Activated naive CD4-positive, alpha-beta T cell treated with anti-CD3 and anti-CD28 coated beads for 36 hours (primary cell): ENCODE measurements at regions of chr7 and their contacts with region 1.

Region 1: DNA sequence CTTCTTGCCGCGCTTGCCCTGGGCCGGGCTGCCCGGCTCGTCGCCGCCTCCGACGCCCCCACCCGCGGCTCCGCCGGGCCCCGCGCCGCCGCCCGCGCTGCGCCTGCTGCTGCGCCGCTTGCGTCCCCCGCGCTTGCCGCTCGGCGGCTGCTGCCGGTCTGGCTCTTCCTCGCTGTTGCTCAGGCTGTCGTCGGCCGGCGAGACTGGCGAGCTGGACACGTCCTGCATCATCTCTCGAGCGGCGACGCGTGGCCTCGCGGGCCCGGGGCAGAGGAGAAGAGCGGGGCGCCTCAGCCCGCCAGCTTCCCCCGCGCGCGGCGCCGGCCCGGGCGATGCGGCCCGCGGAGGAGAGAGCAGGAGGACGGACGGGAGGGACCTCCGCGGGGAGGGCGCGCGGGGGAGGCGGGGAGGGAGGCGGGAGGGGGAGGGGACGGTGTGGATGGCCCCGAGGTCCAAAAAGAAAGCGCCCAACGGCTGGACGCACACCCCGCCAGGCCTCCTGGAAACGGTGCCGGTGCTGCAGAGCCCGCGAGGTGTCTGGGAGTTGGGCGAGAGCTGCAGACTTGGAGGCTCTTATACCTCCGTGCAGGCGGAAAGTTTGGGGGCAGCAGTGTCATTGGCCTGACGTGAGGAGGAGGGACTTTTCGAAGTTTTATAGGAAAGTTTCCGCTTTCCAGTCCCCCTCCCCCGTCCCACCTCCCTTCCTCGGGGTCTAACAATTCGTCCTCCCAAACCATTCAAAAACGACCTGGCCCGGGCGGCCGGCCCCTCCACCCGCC is at the start of gene TWIST1:
- DNase-seq: no peak
- H3K4me3 Mint-ChIP-seq: no peak within 1 kb of the TSS
- H3K27ac Mint-ChIP-seq: no peak within 1 kb of the TSS
- H3K4me1 Mint-ChIP-seq: peaks cover 3% of the 10 kb centered on the region
- H3K27me3 Mint-ChIP-seq: peaks cover 44% of the 10 kb centered on the region
- total RNA-seq, gene TWIST1: not detected

Region 2: GRCh38 chr7:19268737-19269136 is 151.5 kb after region 1 on chr7:
- CTCF ChIA-PET with region 1: interaction called, 10 read pairs
- intact Hi-C with region 1: no loop called
- DNase-seq: no peak
- H3K4me3 Mint-ChIP-seq: no peak overlapping the region
- H3K27ac Mint-ChIP-seq: no peak overlapping the region
- H3K4me1 Mint-ChIP-seq: no peaks in the 10 kb centered on the region
- H3K27me3 Mint-ChIP-seq: no peaks in the 10 kb centered on the region

Region 3: DNA sequence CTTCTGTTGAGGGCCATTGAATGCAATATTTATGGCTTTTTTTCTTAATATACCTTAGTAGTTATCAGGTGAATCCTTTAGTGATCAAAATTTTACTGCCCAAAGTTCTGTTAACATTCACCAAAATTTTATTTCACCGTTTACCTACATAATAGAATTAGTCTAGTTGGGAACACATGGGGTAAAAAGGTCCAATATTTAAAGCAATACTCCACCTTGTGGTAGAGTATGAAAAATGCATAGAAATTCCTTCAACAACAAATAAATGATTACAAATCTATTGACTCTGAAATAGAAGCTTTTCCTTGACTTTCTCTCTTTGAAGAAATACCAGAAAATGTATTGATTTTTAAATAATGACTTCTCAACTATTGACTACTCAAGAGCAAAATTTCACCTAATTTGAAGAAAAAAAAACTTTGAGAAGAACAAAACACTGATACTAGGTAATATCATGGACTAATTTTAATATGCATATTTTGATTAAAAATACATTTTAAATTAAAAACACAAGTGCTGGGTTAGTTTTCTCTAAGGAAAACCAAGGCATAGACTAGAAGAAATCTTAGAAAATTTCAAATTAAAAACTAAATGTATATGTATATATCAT is 548.2 kb after region 1 on chr7:
- CTCF ChIA-PET with region 1: no interaction called
- intact Hi-C with region 1: loop called (anchors 5 kb)
- DNase-seq: no peak
- H3K4me3 Mint-ChIP-seq: no peak overlapping the region
- H3K27ac Mint-ChIP-seq: no peak overlapping the region
- H3K4me1 Mint-ChIP-seq: peaks cover 7% of the 10 kb centered on the region
- H3K27me3 Mint-ChIP-seq: peaks cover 3% of the 10 kb centered on the region